AG04449 (cell line): ENCODE measurements at regions of chr3 and their contacts with region 1.

Region 1: GRCh38 chr3:134373994-134374790 is at the start of gene AMOTL2:
- DNase-seq: peak; percentile 82
- H3K4me3 ChIP-seq: peak within 1 kb of the TSS; percentile 99
- CTCF ChIP-seq: no peak

Region 2: DNA sequence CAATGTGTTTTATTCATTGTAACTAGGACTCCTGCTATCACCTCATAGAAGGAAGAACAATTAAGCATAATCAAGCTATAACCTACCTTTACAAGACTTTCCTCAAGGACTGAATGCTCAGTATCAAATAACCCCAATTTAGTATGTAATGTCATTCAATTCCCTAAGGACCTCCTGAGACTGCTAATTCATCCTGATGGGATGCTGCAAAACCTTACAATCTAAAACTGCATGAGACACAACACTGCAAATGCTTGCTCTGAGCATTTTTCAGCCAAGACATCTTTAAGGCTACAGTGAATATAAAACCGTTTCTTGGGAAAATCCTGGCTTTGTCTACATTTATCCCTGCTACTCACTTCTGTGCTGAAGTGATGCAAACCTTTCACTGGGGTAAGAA is 193.4 kb before region 1 on chr3:
- CTCF ChIA-PET with region 1: no interaction called
- POLR2A ChIA-PET with region 1: no interaction called
- DNase-seq: no peak
- H3K4me3 ChIP-seq: no peak overlapping the region
- CTCF ChIP-seq: no peak

Region 3: GRCh38 chr3:134326760-134327593 is 47.2 kb before region 1 on chr3:
- CTCF ChIA-PET with region 1: interaction called, 3 read pairs
- POLR2A ChIA-PET with region 1: interaction called, 11 read pairs
- DNase-seq: peak; percentile 99
- H3K4me3 ChIP-seq: peak overlapping the region; percentile 2; the same call in 1 of the 2 replicates
- CTCF ChIP-seq: no peak

Region 4: DNA sequence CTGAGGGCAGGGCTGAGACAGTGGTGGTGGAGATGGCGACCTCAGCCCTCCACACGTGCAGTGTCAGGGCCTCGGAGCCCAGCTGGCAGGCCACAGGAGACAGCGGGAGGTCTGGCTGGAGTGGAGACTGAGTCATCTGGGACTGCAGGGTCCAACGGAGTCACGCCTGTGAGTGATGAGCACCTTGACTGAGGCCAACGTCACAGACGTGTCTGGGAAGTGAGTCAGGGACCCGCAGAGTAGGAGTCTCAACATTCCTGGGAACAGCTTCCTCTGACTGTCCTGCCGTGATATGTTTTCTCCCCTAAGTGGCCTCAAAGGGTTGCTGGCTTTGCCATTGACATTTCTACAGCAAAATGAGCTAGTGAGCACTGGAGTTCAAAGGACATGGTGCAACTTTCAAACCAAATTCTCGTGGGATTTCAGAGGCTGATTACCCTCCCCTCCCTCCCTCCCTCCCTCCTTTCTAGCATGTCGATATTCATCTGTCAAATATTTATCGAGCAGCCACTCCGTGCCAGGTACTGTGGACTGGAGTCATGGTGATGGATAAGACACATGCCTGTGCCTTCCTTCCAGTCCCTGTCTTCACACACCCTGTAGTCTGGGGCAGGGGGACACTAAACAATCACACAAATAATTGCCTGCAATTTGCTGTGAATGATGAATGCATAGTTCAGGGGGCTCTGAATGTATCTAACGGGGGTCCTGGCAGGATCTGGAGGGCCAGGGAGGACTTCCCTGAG is 53.4 kb after region 1 on chr3:
- CTCF ChIA-PET with region 1: interaction called, 4 read pairs
- POLR2A ChIA-PET with region 1: interaction called, 63 read pairs
- DNase-seq: peak; percentile 99
- H3K4me3 ChIP-seq: no peak overlapping the region
- CTCF ChIP-seq: no peak

Region 5: GRCh38 chr3:134473868-134474546 is 99.8 kb after region 1 on chr3:
- CTCF ChIA-PET with region 1: interaction called, 62 read pairs
- POLR2A ChIA-PET with region 1: interaction called, 172 read pairs
- DNase-seq: peak; percentile 56
- H3K4me3 ChIP-seq: no peak overlapping the region
- CTCF ChIP-seq: peak; percentile 45